ENCODE measurements at regions of chr4 and their contacts with region 1.

Region 1: DNA sequence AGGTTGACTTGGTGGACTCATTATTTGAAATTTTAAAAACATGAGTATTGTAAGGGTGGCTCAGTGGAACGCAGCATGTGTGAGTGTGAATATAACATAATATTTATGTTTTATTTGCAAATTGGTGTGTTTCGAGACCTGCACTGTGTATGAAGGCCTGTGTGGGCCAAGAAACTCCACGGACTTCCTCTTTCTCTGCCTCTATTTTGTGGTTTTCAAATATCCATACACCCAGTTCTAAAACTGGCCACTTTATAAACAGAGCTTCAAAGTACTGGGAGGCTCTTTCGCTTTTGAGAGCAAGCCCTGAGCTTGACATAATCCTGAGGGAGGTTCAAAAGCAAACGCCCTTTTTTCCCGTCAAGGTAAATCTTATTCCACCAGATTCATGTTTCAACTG is 187.7 kb downstream of the GPAT3 start:
- DNase-seq: no peak
- H3K4me3 ChIP-seq: no peak overlapping the region
- CTCF ChIP-seq: no peak
- POLR2A ChIP-seq: no peak

Region 2: GRCh38 chr4:83231620-83232076 is 492.0 kb before region 1 on chr4:
- intact Hi-C with region 1: loop called (anchors 10 kb)
- DNase-seq: no peak
- H3K4me3 ChIP-seq: no peak overlapping the region
- CTCF ChIP-seq: no peak
- POLR2A ChIP-seq: no peak

Measured in lower leg skin (tissue), 4 donors.